ENCODE measurements at regions of chr15 and their contacts with region 1.

Region 1: GRCh38 chr15:64841258-64842095 is at the start of gene PLEKHO2:
- DNase-seq: peak; percentile 70 to 88 (median 80)
- ATAC-seq: peak; percentile 85
- H3K4me3 ChIP-seq: peak within 1 kb of the TSS; percentile 65
- H3K4me3 Mint-ChIP-seq: peak within 1 kb of the TSS; percentile 85 to 98 (median 96)
- H3K27ac ChIP-seq: peak within 1 kb of the TSS; percentile 81
- H3K27ac Mint-ChIP-seq: peak within 1 kb of the TSS; percentile 83 to 96 (median 91)
- H3K4me1 ChIP-seq: peaks cover 48 to 62% of the 10 kb centered on the region in 2 donors
- H3K4me1 Mint-ChIP-seq: peaks cover 63 to 89% (median 86%) of the 10 kb centered on the region in 7 donors
- H3K27me3 ChIP-seq: no peaks in the 10 kb centered on the region
- H3K27me3 Mint-ChIP-seq: no peaks in the 10 kb centered on the region
- total RNA-seq, gene PLEKHO2: 8.6 to 52.3 (median 14.0) TPM

Region 2: GRCh38 chr15:64825431-64826294 is 15.8 kb before region 1 on chr15 and contains the start of gene PIF1:
- CTCF ChIA-PET with region 1: interaction called, 13 read pairs
- POLR2A ChIA-PET with region 1: interaction called, 9 read pairs
- intact Hi-C with region 1: loop called (anchors 1 kb)
- DNase-seq: peak; percentile 44 to 92 (median 87)
- ATAC-seq: peak; percentile 99
- H3K4me3 ChIP-seq: peak within 1 kb of the TSS; percentile 71
- H3K4me3 Mint-ChIP-seq: peak within 1 kb of the TSS; percentile 82 to 95 (median 88)
- H3K27ac ChIP-seq: peak within 1 kb of the TSS; percentile 37
- H3K27ac Mint-ChIP-seq: peak within 1 kb of the TSS in 8 of 9 donors; percentile 41 to 91 (median 75)
- H3K4me1 ChIP-seq: peaks cover 21 to 24% of the 10 kb centered on the region in 2 donors
- H3K4me1 Mint-ChIP-seq: peaks cover 25 to 42% (median 35%) of the 10 kb centered on the region in 7 donors
- H3K27me3 ChIP-seq: peaks cover 0 to 4% of the 10 kb centered on the region in 2 donors
- H3K27me3 Mint-ChIP-seq: peaks cover 0 to 19% (median 12%) of the 10 kb centered on the region in 5 donors
- total RNA-seq, gene PIF1: 0.34 to 30.2 (median 1.0) TPM in 3 of 5 experiments, not detected in the others